CD8-positive, alpha-beta T cell (primary cell): ENCODE measurements at regions of chr11 and their contacts with region 1.

Region 1: DNA sequence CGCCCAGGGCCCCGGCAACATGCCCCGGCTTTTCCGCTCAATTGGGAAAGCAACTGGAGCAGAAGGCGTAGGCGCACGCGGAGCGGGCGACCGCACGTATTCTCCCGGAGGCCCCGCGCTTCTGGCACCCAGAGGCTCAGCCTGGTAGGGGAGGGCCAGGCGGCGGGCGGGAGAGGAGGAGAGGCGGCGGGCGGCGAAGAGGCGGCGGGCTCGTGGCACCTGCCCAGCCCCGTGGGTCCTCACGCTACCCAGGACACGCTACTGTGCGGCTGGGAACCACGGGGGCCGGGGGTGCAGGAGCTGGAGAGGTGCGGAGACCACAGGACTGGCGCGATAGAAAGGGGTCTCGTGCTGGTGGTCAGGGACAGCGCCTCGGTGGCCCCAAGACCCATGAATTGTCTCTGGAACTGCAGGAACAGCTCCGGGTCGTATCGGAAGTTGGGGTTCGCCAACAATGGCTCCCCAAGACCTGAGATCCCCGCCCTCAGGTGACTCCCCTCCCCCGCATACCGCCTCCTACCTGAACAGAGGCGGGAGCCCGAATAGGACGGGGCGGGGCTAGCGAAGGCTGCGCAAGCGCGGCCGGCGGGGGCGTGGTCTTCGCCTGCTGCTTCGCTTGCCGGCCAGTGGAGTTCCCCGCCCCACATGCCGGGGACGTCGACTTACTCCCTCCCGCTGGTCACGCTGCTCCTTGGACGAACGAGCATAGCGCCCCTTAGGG is at the start of gene SLC37A4:
- DNase-seq: peak; percentile 97 to 100 (median 99)
- ATAC-seq: peak; percentile 93
- H3K4me3 ChIP-seq: peak within 1 kb of the TSS; percentile 94 to 99
- H3K4me3 Mint-ChIP-seq: peak within 1 kb of the TSS; percentile 89
- H3K27ac ChIP-seq: peak within 1 kb of the TSS; percentile 65 to 71
- H3K27ac Mint-ChIP-seq: peak within 1 kb of the TSS; percentile 88
- H3K4me1 ChIP-seq: peaks cover 13% of the 10 kb centered on the region
- H3K4me1 Mint-ChIP-seq: peaks cover 18% of the 10 kb centered on the region
- H3K27me3 ChIP-seq: no peaks in the 10 kb centered on the region
- H3K27me3 Mint-ChIP-seq: no peaks in the 10 kb centered on the region
- CTCF ChIP-seq: peak; percentile 34
- total RNA-seq, gene SLC37A4: 4.0 to 4.6 TPM

Region 2: DNA sequence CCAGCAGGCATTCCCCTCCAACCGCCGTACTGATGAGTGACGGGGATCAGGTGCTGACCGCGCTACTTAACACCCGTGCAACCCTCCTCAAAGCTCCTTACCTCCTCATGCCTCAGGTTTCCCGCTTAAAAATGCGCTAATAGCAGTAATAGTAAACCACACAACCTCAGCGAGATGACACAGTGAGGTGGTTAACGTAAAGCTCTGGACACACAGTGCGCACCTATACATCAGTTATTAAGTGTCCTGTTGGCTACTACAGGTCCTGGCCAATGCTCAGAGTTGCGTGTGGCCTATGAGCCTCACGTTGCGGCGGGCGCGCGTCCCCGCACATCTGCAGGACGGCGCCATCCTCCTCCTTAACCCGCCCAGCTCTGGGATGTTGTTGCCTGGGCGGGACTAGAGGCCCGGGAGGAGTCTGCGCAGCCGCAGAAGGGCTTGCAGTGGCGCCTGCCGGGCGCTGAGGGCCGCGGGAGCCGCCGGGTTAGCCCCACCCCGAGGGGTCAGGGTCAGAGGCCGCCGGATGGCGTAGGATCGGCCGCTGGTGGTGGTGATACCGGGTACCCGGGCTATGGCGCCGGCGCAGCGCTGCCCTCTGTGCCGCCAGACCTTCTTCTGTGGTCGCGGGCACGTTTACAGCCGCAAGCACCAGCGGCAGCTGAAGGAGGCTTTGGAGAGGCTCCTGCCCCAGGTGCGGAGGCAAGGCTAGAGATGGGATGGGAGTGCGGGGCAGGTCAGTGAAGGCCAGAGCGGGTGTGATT is 32.7 kb before region 1 on chr11 and contains the start of gene CENATAC:
- CTCF ChIA-PET with region 1: interaction called, 3 read pairs
- POLR2A ChIA-PET with region 1: no interaction called
- intact Hi-C with region 1: loop called in 1 of 2 experiments (anchors 1 kb)
- DNase-seq: peak; percentile 87 to 97 (median 96)
- ATAC-seq: peak; percentile 94
- H3K4me3 ChIP-seq: peak within 1 kb of the TSS; percentile 89 to 95
- H3K4me3 Mint-ChIP-seq: peak within 1 kb of the TSS; percentile 84
- H3K27ac ChIP-seq: peak within 1 kb of the TSS; percentile 59 to 92
- H3K27ac Mint-ChIP-seq: peak within 1 kb of the TSS; percentile 88
- H3K4me1 ChIP-seq: peaks cover 23% of the 10 kb centered on the region
- H3K4me1 Mint-ChIP-seq: peaks cover 36% of the 10 kb centered on the region
- H3K27me3 ChIP-seq: no peaks in the 10 kb centered on the region
- H3K27me3 Mint-ChIP-seq: no peaks in the 10 kb centered on the region
- CTCF ChIP-seq: no peak
- total RNA-seq, gene CENATAC: 103 to 116 TPM

Region 3: DNA sequence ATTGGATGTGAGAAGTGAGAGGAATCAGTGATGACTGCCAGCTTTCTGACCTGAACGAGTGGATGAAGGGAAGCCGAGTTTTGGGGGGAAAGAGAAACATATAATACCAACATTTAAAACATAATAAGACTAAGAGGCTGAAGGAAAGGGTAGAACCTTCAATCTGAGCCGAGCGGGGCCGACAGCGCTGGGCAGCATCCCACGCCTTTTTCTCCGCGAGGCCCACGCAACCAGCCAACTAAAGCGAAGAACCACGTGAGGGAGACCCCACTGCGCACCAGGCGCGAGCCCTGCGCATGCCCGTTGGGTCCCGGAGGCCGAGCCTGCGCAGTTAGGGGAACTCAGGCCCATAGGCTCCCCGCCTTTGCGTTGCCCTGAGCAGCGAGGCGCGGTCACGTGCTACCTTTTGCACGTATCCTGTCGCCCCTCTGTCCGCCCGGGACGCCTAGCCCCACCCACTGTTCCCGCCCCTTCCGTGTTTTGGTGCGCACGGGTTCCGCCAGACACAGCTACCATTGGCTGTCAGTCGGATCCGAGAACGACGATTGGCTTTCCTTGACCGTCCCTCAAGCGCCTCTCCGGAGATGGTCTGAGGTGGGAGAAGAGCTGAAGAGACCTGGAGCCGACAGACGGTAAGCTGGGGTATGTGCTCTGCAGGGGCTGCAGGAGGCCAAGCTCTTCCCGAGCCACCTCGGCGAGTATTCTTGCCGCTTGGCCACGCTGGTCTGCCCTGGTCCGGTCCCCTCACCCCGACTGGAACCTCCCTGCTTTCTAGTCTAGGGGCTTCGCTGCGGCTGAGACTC is 90.7 kb after region 1 on chr11 and contains the start of gene HINFP:
- CTCF ChIA-PET with region 1: no interaction called
- POLR2A ChIA-PET with region 1: no interaction called
- intact Hi-C with region 1: loop called in 1 of 2 experiments (anchors 1 kb)
- DNase-seq: peak; percentile 100
- ATAC-seq: peak; percentile 97
- H3K4me3 ChIP-seq: peak within 1 kb of the TSS; percentile 81 to 93
- H3K4me3 Mint-ChIP-seq: peak within 1 kb of the TSS; percentile 87
- H3K27ac ChIP-seq: peak within 1 kb of the TSS; percentile 69 to 80
- H3K27ac Mint-ChIP-seq: peak within 1 kb of the TSS; percentile 92
- H3K4me1 ChIP-seq: peaks cover 24% of the 10 kb centered on the region
- H3K4me1 Mint-ChIP-seq: peaks cover 43% of the 10 kb centered on the region
- H3K27me3 ChIP-seq: no peaks in the 10 kb centered on the region
- H3K27me3 Mint-ChIP-seq: no peaks in the 10 kb centered on the region
- CTCF ChIP-seq: no peak
- total RNA-seq, gene HINFP: 17.0 to 19.5 TPM